ENCODE measurements at regions of chr12 and their contacts with region 1.

Region 1: GRCh38 chr12:124745891-124746570 is 117.6 kb downstream of the SCARB1 start:
- DNase-seq: peak; percentile 73 to 80
- H3K4me3 ChIP-seq: no peak overlapping the region
- H3K4me3 Mint-ChIP-seq: no peak overlapping the region
- H3K27ac Mint-ChIP-seq: peak overlapping the region; percentile 43
- H3K4me1 ChIP-seq: peaks cover 12% of the 10 kb centered on the region
- H3K4me1 Mint-ChIP-seq: peaks cover 12% of the 10 kb centered on the region
- H3K27me3 ChIP-seq: no peaks in the 10 kb centered on the region
- H3K27me3 Mint-ChIP-seq: no peaks in the 10 kb centered on the region
- CTCF ChIP-seq: no peak

Region 2: DNA sequence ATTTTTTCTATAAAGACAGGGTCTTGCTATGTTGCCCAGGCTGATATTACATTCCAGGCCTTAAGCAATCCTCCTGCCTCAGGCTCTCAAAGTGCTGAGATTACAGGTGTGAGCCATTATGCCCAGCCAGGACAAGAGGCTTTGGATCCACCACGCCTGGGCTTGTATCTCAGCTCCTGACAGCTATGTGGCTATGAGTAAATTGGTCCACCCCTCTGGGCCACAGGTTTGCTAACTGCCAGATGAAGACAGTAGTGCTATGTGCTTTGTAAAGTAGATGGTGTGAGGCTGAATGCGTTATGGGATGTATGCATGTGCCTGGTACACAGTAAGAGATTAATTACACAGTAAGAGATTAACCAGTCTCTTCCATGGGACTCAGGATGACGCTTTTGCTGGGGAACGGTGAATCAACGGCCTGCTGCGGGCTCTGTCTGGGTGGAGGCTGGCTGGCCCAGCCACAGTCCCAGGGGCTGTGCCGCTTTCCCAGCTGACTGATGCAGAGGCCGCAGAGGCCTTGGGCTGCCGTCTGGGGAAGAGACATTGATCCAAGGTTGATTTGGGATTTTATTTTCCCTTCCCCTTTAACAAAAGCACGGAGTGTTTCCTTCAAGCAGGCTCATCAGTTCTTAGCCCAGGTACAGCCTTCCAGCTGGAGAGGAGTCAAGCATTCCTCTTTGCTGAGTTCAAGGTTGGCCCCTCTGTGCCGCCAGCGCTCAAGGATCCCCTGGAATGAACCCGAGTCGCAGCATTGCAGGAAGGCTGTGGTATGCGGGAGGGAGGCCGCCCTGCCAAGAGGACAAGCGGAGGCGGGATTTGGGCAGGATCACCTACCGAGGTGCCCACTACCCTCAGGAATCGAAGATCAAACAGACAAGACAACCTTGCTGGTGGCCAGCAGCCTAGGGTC is 125.0 kb before region 1 on chr12:
- CTCF ChIA-PET with region 1: no interaction called
- POLR2A ChIA-PET with region 1: no interaction called
- intact Hi-C with region 1: no loop called
- DNase-seq: no peak
- H3K4me3 ChIP-seq: no peak overlapping the region
- H3K4me3 Mint-ChIP-seq: no peak overlapping the region
- H3K27ac Mint-ChIP-seq: peak overlapping the region; percentile 30
- H3K4me1 ChIP-seq: peaks cover 8% of the 10 kb centered on the region
- H3K4me1 Mint-ChIP-seq: peaks cover 6% of the 10 kb centered on the region
- H3K27me3 ChIP-seq: no peaks in the 10 kb centered on the region
- H3K27me3 Mint-ChIP-seq: no peaks in the 10 kb centered on the region
- CTCF ChIP-seq: no peak

Region 3: DNA sequence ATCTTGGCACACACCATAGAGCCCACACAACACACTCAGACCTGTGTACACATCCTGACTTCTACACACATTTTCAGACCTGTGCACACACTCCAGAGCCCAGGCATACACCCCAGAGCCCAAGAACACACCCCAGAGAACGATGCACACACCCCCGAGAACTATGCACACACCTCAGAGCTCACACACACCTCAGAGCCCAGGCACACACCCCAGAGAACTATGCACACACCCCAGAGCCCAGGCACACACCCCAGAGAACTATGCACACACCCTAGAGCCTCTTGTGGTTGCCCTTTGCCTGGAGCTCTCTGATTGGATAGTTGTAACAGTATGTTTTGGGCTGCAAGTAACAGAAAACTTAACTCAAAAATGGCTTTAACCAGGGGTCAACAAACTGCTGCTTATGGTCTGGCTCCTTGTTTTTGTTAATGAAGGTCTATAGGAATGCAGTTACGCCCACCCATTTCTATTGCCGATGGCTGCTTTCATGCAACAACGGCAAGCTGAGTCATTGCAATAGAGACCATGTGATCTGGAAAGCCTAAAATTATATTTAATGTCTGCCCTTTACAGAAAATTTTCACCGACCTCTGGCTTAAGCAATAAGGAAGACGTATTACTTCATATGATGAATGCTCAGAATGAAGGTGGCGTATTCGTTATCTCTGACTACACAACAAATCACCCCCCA is 112.6 kb before region 1 on chr12:
- CTCF ChIA-PET with region 1: no interaction called
- POLR2A ChIA-PET with region 1: no interaction called
- intact Hi-C with region 1: loop called (anchors 1 kb)
- DNase-seq: peak; percentile 69 to 91
- H3K4me3 ChIP-seq: no peak overlapping the region
- H3K4me3 Mint-ChIP-seq: peak overlapping the region; percentile 39
- H3K27ac Mint-ChIP-seq: peak overlapping the region; percentile 92
- H3K4me1 ChIP-seq: peaks cover 72% of the 10 kb centered on the region
- H3K4me1 Mint-ChIP-seq: peaks cover 38% of the 10 kb centered on the region
- H3K27me3 ChIP-seq: no peaks in the 10 kb centered on the region
- H3K27me3 Mint-ChIP-seq: no peaks in the 10 kb centered on the region
- CTCF ChIP-seq: peak in 1 of 2 experiments; percentile 27

Region 4: GRCh38 chr12:124720004-124720680 is 25.9 kb before region 1 on chr12:
- CTCF ChIA-PET with region 1: no interaction called
- POLR2A ChIA-PET with region 1: no interaction called
- intact Hi-C with region 1: loop called (anchors 2 kb)
- DNase-seq: no peak
- H3K4me3 ChIP-seq: no peak overlapping the region
- H3K4me3 Mint-ChIP-seq: no peak overlapping the region
- H3K27ac Mint-ChIP-seq: no peak overlapping the region
- H3K4me1 ChIP-seq: peaks cover 11% of the 10 kb centered on the region
- H3K4me1 Mint-ChIP-seq: peaks cover 24% of the 10 kb centered on the region
- H3K27me3 ChIP-seq: no peaks in the 10 kb centered on the region
- H3K27me3 Mint-ChIP-seq: no peaks in the 10 kb centered on the region
- CTCF ChIP-seq: peak in 1 of 2 experiments; percentile 31